ENCODE measurements at regions of chr11 and their contacts with region 1.

Region 1: DNA sequence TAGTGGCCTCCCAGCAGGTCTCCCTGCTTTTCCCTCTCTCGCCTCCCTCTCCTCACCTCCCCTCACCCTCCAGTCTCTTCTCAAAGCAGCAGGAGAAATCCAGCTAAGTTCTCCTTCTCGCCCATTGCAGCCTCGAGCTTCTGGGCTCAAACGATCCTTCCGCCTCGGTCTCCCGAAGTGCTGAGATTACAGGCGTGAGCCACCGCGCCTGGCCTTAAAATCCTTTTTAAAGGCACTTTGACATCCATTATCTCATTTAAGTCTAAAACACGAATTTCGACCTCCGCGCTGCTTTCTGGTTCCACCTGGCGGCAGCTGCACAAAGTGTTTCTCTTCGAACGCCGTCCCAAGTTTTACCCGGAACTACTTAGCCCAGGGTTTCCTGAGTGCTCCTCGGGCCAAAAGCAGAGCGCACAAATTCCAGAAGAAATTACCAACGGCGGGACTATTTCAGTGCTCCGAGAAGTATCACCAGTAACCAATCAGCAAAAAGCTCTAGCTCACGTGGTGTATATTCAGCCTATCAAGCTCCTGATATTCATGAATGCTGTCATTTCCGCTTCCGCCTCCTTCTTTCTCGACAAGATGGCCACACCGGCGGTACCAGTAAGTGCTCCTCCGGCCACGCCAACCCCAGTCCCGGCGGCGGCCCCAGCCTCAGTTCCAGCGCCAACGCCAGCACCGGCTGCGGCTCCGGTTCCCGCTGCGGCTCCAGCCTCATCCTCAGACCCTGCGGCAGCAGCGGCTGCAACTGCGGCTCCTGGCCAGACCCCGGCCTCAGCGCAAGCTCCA is at the start of gene EIF3F:
- DNase-seq: peak; percentile 73
- ATAC-seq: peak; percentile 97
- H3K4me3 Mint-ChIP-seq: peak within 1 kb of the TSS; percentile 93
- H3K27ac Mint-ChIP-seq: peak within 1 kb of the TSS; percentile 94
- H3K4me1 Mint-ChIP-seq: peaks cover 40% of the 10 kb centered on the region
- H3K27me3 Mint-ChIP-seq: no peaks in the 10 kb centered on the region
- CTCF ChIP-seq: peak; percentile 56
- total RNA-seq, gene EIF3F: 367 and 396 TPM in 2 replicates

Region 2: DNA sequence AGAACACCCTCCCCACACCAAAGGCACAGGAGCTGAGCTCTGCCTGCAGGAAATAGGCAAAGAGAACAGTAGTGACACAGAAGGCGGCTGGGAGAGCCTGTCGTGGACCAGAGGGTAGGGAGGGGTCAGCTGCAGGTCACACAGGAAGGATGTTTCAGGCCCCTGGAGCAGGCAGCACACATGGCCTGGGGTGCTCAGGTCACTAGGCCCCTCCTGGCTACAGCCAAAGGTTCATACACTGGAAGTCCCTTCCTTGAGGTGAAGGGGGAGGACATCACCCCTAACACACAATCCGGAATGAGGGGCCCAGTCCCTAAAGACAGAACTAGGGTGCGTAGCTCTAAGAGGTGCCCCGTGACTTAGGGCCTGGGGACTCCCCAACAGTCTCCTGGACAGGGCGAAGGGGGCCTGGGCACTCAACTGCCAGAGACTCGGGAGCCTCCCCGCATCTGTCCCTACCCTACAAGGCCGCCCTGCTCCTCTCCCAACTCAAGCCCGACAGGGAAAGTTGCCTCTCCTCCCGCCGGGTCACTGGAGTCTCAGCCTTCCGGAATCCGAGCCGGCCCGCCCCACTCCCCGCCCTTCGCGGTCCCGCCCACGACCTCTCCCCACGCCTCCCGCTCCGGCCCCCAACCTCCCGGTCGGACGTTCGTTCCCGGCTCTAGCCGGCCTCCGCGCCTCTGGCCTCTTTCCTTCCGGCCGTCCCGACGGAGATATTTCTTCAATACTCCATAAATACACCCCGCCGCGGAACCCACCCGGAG is 313.8 kb before region 1 on chr11 and contains the start of gene CYB5R2:
- CTCF ChIA-PET with region 1: no interaction called
- POLR2A ChIA-PET with region 1: no interaction called
- intact Hi-C with region 1: loop called (anchors 5 kb)
- DNase-seq: peak; percentile 34
- ATAC-seq: peak; percentile 36
- H3K4me3 Mint-ChIP-seq: peak within 1 kb of the TSS; percentile 85
- H3K27ac Mint-ChIP-seq: peak within 1 kb of the TSS; percentile 86
- H3K4me1 Mint-ChIP-seq: peaks cover 52% of the 10 kb centered on the region
- H3K27me3 Mint-ChIP-seq: peaks cover 17% of the 10 kb centered on the region
- CTCF ChIP-seq: no peak
- total RNA-seq, gene CYB5R2: 22.3 and 25.9 TPM in 2 replicates

Region 3: GRCh38 chr11:7892840-7893254 is 94.1 kb before region 1 on chr11:
- CTCF ChIA-PET with region 1: interaction called, 6 read pairs
- POLR2A ChIA-PET with region 1: interaction called, 4 read pairs
- intact Hi-C with region 1: loop called (anchors 1 kb)
- DNase-seq: no peak
- ATAC-seq: peak; percentile 65
- H3K4me3 Mint-ChIP-seq: no peak overlapping the region
- H3K27ac Mint-ChIP-seq: no peak overlapping the region
- H3K4me1 Mint-ChIP-seq: peaks cover 21% of the 10 kb centered on the region
- H3K27me3 Mint-ChIP-seq: peaks cover 7% of the 10 kb centered on the region
- CTCF ChIP-seq: no peak

Region 4: DNA sequence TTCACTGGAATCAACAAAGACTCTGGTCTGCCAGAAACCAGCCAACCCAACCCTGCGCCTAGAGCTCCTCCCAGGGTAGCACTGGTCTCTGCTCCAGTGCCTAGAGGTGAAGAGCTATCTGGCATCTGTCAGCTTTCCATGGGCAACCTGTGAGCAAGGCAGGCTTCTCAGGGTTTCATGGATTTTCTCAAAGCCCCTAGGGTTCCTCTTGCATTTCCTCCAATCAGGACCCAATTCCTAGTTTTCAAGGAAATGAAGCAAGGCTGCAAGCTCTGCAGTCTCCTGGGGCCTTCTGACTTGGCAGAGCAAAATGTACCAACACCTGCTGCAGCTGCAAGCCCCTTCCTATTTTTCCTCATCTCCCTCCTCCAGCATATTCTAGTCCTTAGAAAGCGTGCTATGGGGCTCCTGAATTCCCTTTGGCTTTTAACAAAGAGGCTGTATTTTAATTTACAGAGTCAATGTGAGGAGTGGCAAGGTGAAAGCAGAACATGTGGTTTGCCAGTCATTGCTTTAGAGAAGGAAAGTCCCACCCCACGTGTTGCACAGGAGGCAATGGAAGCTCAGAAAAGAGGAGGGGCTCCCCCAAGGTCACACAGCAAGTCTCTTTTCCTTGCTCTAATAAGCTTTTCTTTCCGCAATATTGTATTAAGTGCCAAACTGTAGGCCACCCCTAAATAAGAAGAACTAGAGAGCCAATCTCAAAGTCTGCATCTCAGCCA is 214.8 kb after region 1 on chr11:
- CTCF ChIA-PET with region 1: no interaction called
- POLR2A ChIA-PET with region 1: interaction called, 3 read pairs
- intact Hi-C with region 1: loop called (anchors 5 kb)
- DNase-seq: peak; percentile 36
- ATAC-seq: peak; percentile 85
- H3K4me3 Mint-ChIP-seq: peak overlapping the region; percentile 16
- H3K27ac Mint-ChIP-seq: peak overlapping the region; percentile 87
- H3K4me1 Mint-ChIP-seq: peaks cover 74% of the 10 kb centered on the region
- H3K27me3 Mint-ChIP-seq: no peaks in the 10 kb centered on the region
- CTCF ChIP-seq: no peak